ENCODE measurements at regions of chr20 and their contacts with region 1.

Region 1: GRCh38 chr20:62010551-62011402 is 54.9 kb downstream of the TAF4 start:
- DNase-seq: peak; percentile 67
- ATAC-seq: peak; percentile 75
- H3K4me3 Mint-ChIP-seq: no peak overlapping the region
- H3K27ac Mint-ChIP-seq: no peak overlapping the region
- H3K4me1 Mint-ChIP-seq: no peaks in the 10 kb centered on the region
- H3K27me3 Mint-ChIP-seq: no peaks in the 10 kb centered on the region

Region 2: GRCh38 chr20:62025832-62026563 is 15.2 kb after region 1 on chr20:
- CTCF ChIA-PET with region 1: interaction called, 15 read pairs
- POLR2A ChIA-PET with region 1: no interaction called
- DNase-seq: peak; percentile 27
- ATAC-seq: peak; percentile 62
- H3K4me3 Mint-ChIP-seq: no peak overlapping the region
- H3K27ac Mint-ChIP-seq: no peak overlapping the region
- H3K4me1 Mint-ChIP-seq: peaks cover 25% of the 10 kb centered on the region
- H3K27me3 Mint-ChIP-seq: no peaks in the 10 kb centered on the region

Region 3: DNA sequence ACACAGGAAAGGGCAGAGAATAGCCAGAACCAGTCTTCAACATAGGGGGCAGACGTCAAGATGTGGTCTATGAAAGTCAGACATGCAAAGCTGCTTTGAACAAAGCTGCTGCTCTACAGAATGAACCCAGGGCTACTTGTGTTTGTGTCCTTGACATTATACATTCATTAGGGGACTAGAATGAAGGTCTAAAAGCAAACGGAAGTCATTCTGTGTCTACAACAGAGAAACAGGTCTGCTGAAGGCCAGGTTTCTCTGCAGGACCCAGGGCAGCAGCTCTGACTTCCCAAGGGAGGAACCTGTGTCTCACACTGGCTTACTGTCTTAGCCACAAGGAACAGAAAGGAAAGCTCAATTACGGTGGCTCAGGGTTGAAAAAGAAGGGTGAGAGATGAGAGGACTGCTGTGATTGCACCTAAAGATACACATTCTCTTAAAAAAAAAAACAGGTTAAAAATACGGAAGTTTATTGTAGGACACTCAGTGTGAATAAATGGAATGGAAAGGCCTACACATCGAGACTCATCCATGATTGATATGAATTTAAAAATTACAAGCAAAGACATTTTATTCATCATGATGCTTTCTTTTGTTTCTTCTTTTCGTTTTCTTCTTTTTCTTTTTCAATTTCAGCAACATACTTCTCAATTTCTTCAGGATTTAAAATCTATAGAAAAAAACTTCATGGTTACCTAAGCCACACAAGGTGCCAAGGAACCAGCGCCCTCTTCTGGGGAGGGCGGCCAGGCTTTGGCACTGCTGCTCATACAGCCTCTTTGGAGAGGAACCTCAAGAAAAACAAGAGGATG is 125.7 kb after region 1 on chr20:
- CTCF ChIA-PET with region 1: interaction called, 18 read pairs
- POLR2A ChIA-PET with region 1: no interaction called
- DNase-seq: peak; percentile 79
- ATAC-seq: peak; percentile 66
- H3K4me3 Mint-ChIP-seq: no peak overlapping the region
- H3K27ac Mint-ChIP-seq: peak overlapping the region; percentile 57
- H3K4me1 Mint-ChIP-seq: peaks cover 43% of the 10 kb centered on the region
- H3K27me3 Mint-ChIP-seq: no peaks in the 10 kb centered on the region

Measured in activated CD8-positive, alpha-beta T cell treated with anti-CD3 and anti-CD28 coated beads, Interleukin-2, amount 10 ng/mL, durations not matched to agents 7 days and 5 days (primary cell).